ENCODE measurements at regions of chr5 and their contacts with region 1.

Region 1: GRCh38 chr5:169701910-169702451 is 64.9 kb downstream of the DOCK2 start:
- DNase-seq: no peak
- H3K4me3 ChIP-seq: no peak overlapping the region
- CTCF ChIP-seq: peak; percentile 54

Region 2: DNA sequence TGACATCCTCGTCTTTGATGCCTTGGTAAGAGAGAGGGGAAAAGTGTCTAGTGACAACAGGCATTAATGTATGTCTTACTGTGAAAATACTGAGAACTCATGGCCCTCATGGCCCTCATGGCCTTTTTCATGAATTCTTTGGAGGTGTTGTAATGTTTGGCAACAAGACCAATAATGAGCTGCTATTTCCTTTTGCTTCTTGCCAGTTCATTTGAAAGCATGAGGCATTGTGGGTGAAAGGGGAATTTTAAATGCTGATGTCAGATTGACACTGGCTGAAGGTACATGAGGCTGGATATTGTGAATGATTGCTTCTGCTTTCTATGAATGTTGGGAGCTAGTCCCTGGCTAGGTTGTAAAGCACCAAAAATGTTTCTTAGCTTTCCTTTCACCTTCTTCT is 14.3 kb after region 1 on chr5:
- CTCF ChIA-PET with region 1: interaction called, 20 read pairs
- POLR2A ChIA-PET with region 1: no interaction called
- DNase-seq: peak; percentile 45
- H3K4me3 ChIP-seq: no peak overlapping the region
- CTCF ChIP-seq: no peak

Region 3: DNA sequence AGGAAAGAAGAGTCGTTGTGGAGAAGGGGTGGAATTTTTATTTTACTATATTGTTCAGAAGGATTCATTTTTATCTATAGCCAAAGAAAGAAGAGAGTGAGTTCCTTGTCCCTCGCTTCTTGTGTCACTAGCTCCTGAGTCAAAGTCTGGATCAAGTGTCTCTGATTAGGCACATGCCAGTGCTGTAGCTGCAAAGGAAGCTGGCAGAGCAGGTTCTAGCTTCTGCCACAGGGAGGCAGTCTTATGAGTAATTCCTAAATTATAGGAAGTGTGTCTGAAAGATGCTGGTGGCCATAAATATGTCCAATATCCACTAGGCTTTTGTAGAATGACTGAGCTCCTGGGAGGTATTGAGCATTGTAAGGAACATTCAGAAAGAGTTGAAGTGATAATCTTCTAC is 19.8 kb after region 1 on chr5:
- CTCF ChIA-PET with region 1: interaction called, 11 read pairs
- POLR2A ChIA-PET with region 1: no interaction called
- DNase-seq: no peak
- H3K4me3 ChIP-seq: no peak overlapping the region
- CTCF ChIP-seq: no peak

Region 4: GRCh38 chr5:169742771-169743296 is 40.9 kb after region 1 on chr5:
- CTCF ChIA-PET with region 1: interaction called, 17 read pairs
- POLR2A ChIA-PET with region 1: interaction called, 6 read pairs
- DNase-seq: peak; percentile 79
- H3K4me3 ChIP-seq: no peak overlapping the region
- CTCF ChIP-seq: no peak

Region 5: GRCh38 chr5:169805527-169805934 is 103.5 kb after region 1 on chr5:
- CTCF ChIA-PET with region 1: interaction called, 20 read pairs
- POLR2A ChIA-PET with region 1: interaction called, 16 read pairs
- DNase-seq: no peak
- H3K4me3 ChIP-seq: no peak overlapping the region
- CTCF ChIP-seq: no peak

Region 6: DNA sequence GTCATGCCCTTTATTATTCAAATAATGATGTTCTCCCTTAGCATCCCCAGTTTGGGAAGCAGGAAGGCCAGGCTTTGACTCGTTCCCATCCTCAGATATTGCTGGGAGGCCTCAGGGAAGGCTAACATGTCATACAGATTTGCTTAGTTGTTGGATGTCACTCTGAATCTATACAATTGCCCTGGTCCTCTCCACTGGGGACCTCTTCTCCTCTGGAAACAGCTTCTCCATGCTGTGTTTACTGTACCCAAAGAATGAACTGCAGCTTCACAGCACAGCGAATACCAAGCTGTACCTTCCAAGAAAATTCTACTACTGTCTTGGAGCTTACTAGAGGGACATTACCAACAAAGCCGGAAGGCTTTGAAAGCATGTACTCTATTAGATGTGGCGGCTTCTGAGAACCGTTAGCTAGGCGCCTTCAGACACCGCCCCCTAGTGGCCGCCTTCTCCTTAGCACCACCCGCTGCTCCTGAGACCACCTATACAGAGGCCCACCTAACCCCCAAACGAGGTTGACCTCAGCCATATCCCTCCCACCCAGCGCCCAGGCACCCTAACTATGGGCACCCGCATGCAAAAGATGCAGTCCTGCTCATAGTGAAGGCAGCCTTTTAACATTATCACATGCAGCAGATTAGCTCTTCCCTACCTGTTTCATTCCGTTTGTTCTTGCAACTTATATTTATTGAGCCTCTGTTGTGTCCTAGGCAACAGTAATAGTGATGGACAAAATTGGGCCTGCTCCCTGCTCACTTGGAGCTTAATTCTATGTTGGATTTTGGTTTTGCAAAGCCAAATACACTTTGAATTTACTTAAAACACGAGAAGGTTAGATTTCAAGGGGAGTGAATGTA is 368.8 kb after region 1 on chr5:
- CTCF ChIA-PET with region 1: interaction called, 60 read pairs
- POLR2A ChIA-PET with region 1: no interaction called
- DNase-seq: no peak
- H3K4me3 ChIP-seq: no peak overlapping the region
- CTCF ChIP-seq: peak; percentile 79

Region 7: GRCh38 chr5:170216266-170216864 is 514.4 kb after region 1 on chr5:
- CTCF ChIA-PET with region 1: interaction called, 12 read pairs
- POLR2A ChIA-PET with region 1: no interaction called
- DNase-seq: peak; percentile 24
- H3K4me3 ChIP-seq: no peak overlapping the region
- CTCF ChIP-seq: peak; percentile 59